ENCODE measurements at regions of chr12 and their contacts with region 1.

Region 1: DNA sequence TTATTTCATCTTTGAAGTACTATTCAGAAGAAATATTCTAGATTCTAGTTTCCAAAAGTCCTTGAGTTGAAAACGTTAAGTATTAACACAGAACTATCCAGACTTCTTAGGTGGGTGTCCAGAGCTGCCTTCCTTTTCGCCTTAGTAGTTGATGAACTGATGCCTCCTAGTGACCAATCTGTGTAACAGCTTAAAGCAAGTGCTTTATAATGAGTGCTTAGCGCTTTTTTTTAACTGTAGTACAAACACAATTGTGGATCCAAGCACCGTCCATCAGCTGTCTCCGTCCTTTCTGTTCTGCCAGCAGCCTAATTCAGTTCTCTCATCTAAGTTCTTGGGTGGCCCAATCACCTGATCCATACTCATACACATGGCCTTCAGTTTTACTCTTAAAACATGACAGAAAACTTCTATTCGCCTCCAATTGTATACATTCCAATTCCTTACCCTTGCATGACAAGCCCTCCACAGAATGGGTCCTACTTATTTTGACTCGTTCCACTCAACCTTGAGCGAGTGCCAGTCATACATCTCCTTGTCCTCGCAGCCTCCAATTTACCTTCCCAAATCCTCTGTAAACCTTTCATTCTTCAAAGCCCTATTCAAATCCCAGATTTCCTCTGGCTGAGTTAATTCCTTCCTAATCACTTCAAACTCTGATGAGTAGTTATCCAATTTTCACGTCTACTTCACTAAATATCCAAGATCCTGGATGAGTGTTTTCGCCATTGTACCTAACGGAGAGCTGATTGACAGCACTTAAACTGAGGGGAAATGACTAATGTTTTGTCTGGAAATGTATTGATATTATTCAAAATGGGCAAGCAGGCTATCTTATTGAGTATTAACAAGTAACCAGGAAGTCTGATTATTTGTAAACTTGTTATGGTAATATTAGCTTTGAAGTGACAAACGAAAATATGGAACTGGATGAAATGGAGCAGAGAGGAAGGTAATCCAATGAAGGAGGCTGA is 5.8 kb upstream of the PHLDA1 start:
- DNase-seq: no peak
- H3K4me3 ChIP-seq: no peak overlapping the region
- H3K27me3 ChIP-seq: no peaks in the 10 kb centered on the region
- CTCF ChIP-seq: peak; percentile 79

Region 2: GRCh38 chr12:75553398-75553797 is 484.0 kb before region 1 on chr12:
- CTCF ChIA-PET with region 1: interaction called, 13 read pairs
- POLR2A ChIA-PET with region 1: interaction called, 3 read pairs
- DNase-seq: no peak
- H3K4me3 ChIP-seq: no peak overlapping the region
- H3K27me3 ChIP-seq: no peaks in the 10 kb centered on the region
- CTCF ChIP-seq: no peak

Measured in BJ (cell line).